ENCODE measurements at regions of chr16 and their contacts with region 1.

Region 1: GRCh38 chr16:85347213-85347591 is 234.9 kb upstream of the CIBAR2 start:
- DNase-seq: peak; percentile 63
- H3K4me3 ChIP-seq: no peak overlapping the region
- H3K27ac ChIP-seq: peak overlapping the region in 1 of 2 experiments; percentile 97; a peak in 1 of 4 replicates
- H3K4me1 ChIP-seq: peaks cover 13 to 60% of the 10 kb centered on the region in 2 experiments; a peak in 2 of 4 replicates
- H3K27me3 ChIP-seq: no peaks in the 10 kb centered on the region
- CTCF ChIP-seq: peak; percentile 45
- EP300 ChIP-seq: no peak
- RAD21 ChIP-seq: peak; percentile 73

Region 2: GRCh38 chr16:85206472-85207356 is 140.5 kb before region 1 on chr16:
- CTCF ChIA-PET with region 1: no interaction called
- POLR2A ChIA-PET with region 1: no interaction called
- DNase-seq: peak; percentile 92
- H3K4me3 ChIP-seq: no peak overlapping the region
- H3K27ac ChIP-seq: peak overlapping the region in 1 of 2 experiments; percentile 98; a peak in 2 of 4 replicates
- H3K4me1 ChIP-seq: peaks cover 35 to 77% of the 10 kb centered on the region in 2 experiments; a peak in 3 of 4 replicates
- H3K27me3 ChIP-seq: no peaks in the 10 kb centered on the region
- CTCF ChIP-seq: no peak
- EP300 ChIP-seq: peak; percentile 15 to 81; a peak in 2 of 4 replicates
- RAD21 ChIP-seq: peak; percentile 29; the same call in 1 of the 2 replicates

Region 3: GRCh38 chr16:85265161-85265784 is 81.9 kb before region 1 on chr16:
- CTCF ChIA-PET with region 1: no interaction called
- POLR2A ChIA-PET with region 1: no interaction called
- DNase-seq: no peak
- H3K4me3 ChIP-seq: no peak overlapping the region
- H3K27ac ChIP-seq: peak overlapping the region in 1 of 2 experiments; percentile 100; a peak in 2 of 4 replicates
- H3K4me1 ChIP-seq: peaks cover 0 to 61% of the 10 kb centered on the region in 2 experiments; a peak in 2 of 4 replicates
- H3K27me3 ChIP-seq: no peaks in the 10 kb centered on the region
- CTCF ChIP-seq: no peak
- EP300 ChIP-seq: no peak
- RAD21 ChIP-seq: no peak

Region 4: DNA sequence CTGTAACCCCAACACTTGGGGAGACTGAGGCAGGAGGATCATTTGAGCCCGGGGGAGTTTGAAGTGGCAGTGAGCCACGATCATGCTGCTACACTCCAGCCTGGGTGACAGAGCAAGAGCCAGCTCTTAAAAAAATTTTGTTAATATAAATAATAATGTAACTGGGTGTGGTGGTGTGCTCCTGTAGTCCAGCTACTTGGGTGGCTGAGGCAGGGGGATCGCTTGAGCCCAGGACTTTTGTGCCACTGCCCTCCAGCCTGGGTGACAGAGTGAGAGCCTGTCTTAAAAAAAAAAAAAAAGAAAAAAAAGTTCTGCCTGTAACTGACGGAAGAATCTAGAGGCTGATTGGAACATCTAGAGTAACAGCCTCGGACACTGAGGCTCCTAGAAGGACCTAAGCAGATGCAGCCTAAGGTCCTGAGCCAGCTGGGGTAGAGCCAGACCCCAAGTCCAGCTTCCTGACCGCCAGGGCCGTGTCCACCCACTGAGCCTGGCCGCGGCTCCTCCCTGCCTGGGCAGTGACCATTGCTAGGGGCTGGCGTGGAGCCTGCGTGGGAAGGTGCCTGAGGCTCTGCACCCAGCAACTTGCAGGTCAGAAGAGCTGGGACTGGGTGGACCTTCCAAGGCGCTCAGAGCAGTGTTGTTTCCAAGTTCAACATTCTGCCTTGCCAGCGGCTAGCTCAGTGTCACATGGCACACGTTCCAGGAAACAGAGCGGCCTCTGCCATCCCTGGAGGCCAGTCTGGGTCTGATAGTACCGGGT is 25.5 kb before region 1 on chr16:
- CTCF ChIA-PET with region 1: interaction called, 14 read pairs
- POLR2A ChIA-PET with region 1: interaction called, 4 read pairs
- DNase-seq: peak; percentile 77
- H3K4me3 ChIP-seq: no peak overlapping the region; a peak in 1 of 4 replicates
- H3K27ac ChIP-seq: peak overlapping the region; percentile 39 to 94; a peak in 3 of 4 replicates
- H3K4me1 ChIP-seq: peaks cover 4 to 36% of the 10 kb centered on the region in 2 experiments; a peak in 1 of 4 replicates
- H3K27me3 ChIP-seq: no peaks in the 10 kb centered on the region
- CTCF ChIP-seq: no peak
- EP300 ChIP-seq: no peak
- RAD21 ChIP-seq: no peak

Region 5: GRCh38 chr16:85360323-85361277 is 13.4 kb after region 1 on chr16:
- CTCF ChIA-PET with region 1: interaction called, 16 read pairs
- POLR2A ChIA-PET with region 1: interaction called, 11 read pairs
- DNase-seq: peak; percentile 88
- H3K4me3 ChIP-seq: no peak overlapping the region
- H3K27ac ChIP-seq: peak overlapping the region in 1 of 2 experiments; percentile 77; a peak in 2 of 4 replicates
- H3K4me1 ChIP-seq: peaks cover 0 to 83% of the 10 kb centered on the region in 2 experiments; a peak in 1 of 4 replicates
- H3K27me3 ChIP-seq: no peaks in the 10 kb centered on the region
- CTCF ChIP-seq: no peak
- EP300 ChIP-seq: peak in 1 of 2 experiments; percentile 85; a peak in 2 of 4 replicates
- RAD21 ChIP-seq: no peak

Region 6: GRCh38 chr16:85393674-85394483 is 46.7 kb after region 1 on chr16:
- CTCF ChIA-PET with region 1: interaction called, 10 read pairs
- POLR2A ChIA-PET with region 1: interaction called, 8 read pairs
- DNase-seq: peak; percentile 90
- H3K4me3 ChIP-seq: peak overlapping the region in 1 of 2 experiments; percentile 37; a peak in 1 of 4 replicates
- H3K27ac ChIP-seq: peak overlapping the region; percentile 75 to 99; a peak in 3 of 4 replicates
- H3K4me1 ChIP-seq: peaks cover 43 to 78% of the 10 kb centered on the region in 2 experiments
- H3K27me3 ChIP-seq: no peaks in the 10 kb centered on the region
- CTCF ChIP-seq: peak; percentile 88
- EP300 ChIP-seq: no peak
- RAD21 ChIP-seq: peak; percentile 71

Region 7: GRCh38 chr16:85428168-85428898 is 81.1 kb after region 1 on chr16:
- CTCF ChIA-PET with region 1: interaction called, 10 read pairs
- POLR2A ChIA-PET with region 1: no interaction called
- DNase-seq: peak; percentile 73
- H3K4me3 ChIP-seq: no peak overlapping the region; a peak in 1 of 4 replicates
- H3K27ac ChIP-seq: no peak overlapping the region
- H3K4me1 ChIP-seq: peaks cover 0 to 55% of the 10 kb centered on the region in 2 experiments; a peak in 1 of 4 replicates
- H3K27me3 ChIP-seq: no peaks in the 10 kb centered on the region
- CTCF ChIP-seq: peak; percentile 57
- EP300 ChIP-seq: no peak
- RAD21 ChIP-seq: peak; percentile 63

Region 8: DNA sequence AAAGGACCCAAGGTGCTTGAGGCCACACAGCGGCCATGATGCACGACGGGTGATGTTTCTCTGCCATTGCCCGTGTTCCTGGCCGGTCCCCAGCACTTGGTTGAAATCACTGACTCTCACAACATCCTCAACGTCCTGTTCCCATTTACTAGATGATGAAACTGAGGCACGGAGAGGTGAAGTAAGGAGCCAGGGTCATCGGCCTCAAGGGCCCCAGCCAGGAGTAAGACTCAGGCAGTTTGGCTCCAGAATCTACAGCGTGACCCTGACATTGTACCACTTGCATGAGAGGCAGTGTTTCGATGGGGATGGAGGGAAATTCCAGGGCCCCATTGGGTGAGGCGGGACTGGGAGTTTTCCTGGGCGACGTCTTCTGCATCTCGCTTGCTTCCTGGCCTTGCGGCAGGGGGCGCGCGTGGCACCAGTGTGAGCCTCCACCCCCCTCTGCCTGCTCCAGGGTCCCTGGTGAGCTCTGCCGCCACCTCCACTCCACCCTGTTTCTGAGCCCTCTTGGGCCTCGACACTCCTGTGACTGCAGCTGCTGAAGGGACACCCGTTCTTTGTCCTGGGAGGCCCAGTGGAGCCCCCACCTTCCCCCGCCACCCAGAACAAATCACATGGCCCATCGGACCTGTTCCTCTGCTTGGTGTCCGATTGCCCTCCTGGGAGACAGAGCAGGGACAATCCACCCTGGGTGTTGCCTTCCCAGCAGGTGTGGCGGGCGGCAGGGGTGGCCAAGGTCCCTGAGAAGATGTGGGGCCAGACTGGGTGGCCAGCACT is 133.0 kb after region 1 on chr16:
- CTCF ChIA-PET with region 1: no interaction called
- POLR2A ChIA-PET with region 1: no interaction called
- DNase-seq: no peak
- H3K4me3 ChIP-seq: no peak overlapping the region
- H3K27ac ChIP-seq: no peak overlapping the region
- H3K4me1 ChIP-seq: peaks cover 0 to 12% of the 10 kb centered on the region in 2 experiments; a peak in 1 of 4 replicates
- H3K27me3 ChIP-seq: no peaks in the 10 kb centered on the region
- CTCF ChIP-seq: no peak
- EP300 ChIP-seq: no peak
- RAD21 ChIP-seq: no peak

Measured in SK-N-SH (cell line).